SK-N-SH (cell line): ENCODE measurements at regions of chr19 and their contacts with region 1.

Region 1: DNA sequence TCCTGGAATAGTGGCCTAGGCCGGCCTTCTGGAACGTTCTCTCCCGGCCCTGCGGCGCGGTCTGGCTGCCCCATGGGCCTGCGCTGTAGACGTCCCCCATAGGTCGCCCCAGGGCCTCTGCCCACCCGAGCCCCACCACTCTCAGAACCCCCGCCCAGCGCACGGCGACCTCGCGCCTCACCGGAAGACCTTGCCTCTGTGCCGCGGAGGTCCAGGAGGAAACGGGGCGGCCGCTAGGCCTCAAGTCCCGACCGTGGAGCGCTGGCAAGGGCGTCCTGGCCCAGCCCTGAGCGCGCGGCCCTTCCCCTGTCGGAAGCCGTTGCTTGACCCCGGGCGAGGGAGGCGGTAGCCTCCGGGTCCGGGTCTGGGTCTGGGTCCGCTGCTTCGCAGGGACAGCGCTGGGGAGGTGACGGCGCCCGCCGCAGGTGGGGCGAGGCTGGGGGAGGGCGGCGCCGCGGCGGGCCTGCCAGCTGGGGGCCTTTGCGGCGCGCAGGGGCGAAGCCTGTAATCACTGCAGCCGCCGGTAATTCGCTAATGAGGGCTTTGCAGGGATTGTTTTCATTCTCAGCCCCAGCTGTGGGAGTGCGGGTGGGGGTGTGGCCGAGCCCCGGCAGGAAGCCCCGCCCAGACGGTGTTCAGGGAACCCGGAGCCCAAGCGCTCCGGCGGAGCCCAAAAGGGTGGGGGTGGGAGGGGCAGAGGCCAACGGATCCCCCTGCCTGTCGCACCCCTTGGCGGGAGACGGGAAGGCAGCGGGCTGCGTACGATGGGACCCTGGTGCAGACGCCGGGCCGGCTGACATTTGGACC is 8.6 kb downstream of the C19orf25 start:
- DNase-seq: no peak
- H3K4me3 ChIP-seq: no peak overlapping the region
- H3K27ac ChIP-seq: no peak overlapping the region; a peak in 1 of 4 replicates
- H3K4me1 ChIP-seq: peaks cover 0 to 14% of the 10 kb centered on the region in 2 experiments; a peak in 1 of 4 replicates
- H3K27me3 ChIP-seq: no peaks in the 10 kb centered on the region
- CTCF ChIP-seq: no peak
- EP300 ChIP-seq: no peak
- RAD21 ChIP-seq: no peak

Region 2: GRCh38 chr19:1223018-1223855 is 247.2 kb before region 1 on chr19:
- CTCF ChIA-PET with region 1: no interaction called
- POLR2A ChIA-PET with region 1: no interaction called
- DNase-seq: peak; percentile 76
- H3K4me3 ChIP-seq: no peak overlapping the region; a peak in 1 of 4 replicates
- H3K27ac ChIP-seq: no peak overlapping the region; a peak in 1 of 4 replicates
- H3K4me1 ChIP-seq: peaks cover 0 to 5% of the 10 kb centered on the region in 2 experiments; a peak in 1 of 4 replicates
- H3K27me3 ChIP-seq: no peaks in the 10 kb centered on the region
- CTCF ChIP-seq: peak; percentile 61
- EP300 ChIP-seq: no peak
- RAD21 ChIP-seq: peak; percentile 39; the same call in 1 of the 2 replicates

Region 3: DNA sequence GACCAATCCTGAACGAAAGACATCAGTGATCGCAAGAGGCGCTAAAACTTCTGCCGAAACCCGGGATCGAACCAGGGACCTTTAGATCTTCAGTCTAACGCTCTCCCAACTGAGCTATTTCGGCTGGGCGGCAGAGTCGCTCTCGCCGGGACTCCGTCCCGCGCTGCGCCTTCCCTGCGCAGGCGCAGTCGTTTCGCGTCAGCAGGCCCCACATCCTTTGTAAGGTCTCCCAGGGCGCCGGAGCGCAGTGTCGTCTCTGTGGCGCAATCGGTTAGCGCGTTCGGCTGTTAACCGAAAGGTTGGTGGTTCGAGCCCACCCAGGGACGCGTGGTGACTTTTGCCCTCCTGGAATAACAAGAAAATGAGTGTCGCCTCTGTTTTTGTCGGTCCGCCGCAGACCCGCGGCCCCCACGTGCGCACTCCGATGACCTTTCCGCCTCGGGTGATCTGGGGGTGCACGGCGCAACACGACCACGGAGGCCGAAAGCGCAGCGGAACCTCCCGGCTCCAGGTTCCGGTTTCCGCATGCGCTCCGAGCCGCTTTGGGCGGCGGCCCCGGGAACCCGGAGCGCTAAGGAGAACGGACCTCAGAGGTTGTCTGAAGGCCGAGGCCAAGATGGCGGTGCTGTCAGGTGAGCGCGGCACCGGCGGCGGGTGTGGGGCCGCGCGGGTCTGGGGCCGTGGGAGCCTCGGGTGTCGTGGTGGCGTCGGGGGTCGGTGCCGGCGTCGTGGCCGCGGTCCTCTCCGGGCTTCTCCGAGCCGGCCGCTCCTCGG is 86.9 kb before region 1 on chr19 and contains the start of gene NDUFS7:
- CTCF ChIA-PET with region 1: no interaction called
- POLR2A ChIA-PET with region 1: no interaction called
- DNase-seq: peak; percentile 90
- H3K4me3 ChIP-seq: peak within 1 kb of the TSS; percentile 83 to 91
- H3K27ac ChIP-seq: peak within 1 kb of the TSS; percentile 62 to 87
- H3K4me1 ChIP-seq: peaks cover 0 to 12% of the 10 kb centered on the region in 2 experiments; a peak in 1 of 4 replicates
- H3K27me3 ChIP-seq: no peaks in the 10 kb centered on the region
- CTCF ChIP-seq: peak; percentile 39; the same call in 1 of the 2 replicates
- EP300 ChIP-seq: peak; percentile 1 to 51; a peak in 2 of 4 replicates
- RAD21 ChIP-seq: no peak
- polyA plus RNA-seq, gene NDUFS7: 52.5 and 66.4 TPM in 2 replicates

Region 4: DNA sequence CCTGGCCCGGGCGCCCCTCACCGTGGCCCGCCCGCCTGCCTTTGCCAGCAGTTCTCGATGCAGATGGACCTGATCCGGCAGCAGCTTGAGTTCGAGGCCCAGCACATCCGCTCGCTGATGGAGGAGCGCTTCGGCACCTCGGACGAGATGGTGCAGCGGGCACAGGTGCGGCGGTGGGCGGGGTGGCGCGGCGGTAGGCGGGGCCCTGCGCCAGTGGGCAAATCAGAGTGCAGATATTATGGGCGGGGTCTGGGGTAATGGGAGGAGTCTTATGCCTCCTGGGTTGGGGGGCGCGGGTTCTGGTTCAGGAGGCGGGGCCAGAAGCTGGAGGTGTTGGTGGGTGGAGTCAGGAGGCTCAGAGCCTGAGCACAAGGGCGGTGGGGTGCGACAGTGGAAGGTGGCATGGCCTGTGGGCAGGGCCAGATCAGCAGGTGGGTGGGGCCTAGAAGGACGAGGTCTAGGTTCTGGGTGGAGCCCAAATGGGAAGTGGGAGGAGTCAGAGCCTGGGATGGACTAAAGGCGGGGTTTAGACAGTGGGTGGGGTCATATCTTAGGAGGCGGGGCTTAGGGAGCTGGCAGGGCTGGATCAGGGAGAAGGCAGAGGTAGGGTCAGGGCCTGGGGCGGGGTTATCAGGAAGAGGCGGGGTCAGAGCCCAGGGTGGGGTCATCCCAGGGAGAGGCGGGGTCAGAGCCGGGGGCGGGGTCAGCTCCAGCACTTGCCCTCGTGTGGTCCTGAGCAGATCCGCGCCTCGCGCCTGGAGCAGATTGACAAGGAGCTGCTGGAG is 14.9 kb before region 1 on chr19:
- CTCF ChIA-PET with region 1: interaction called, 5 read pairs
- POLR2A ChIA-PET with region 1: interaction called, 10 read pairs
- DNase-seq: peak; percentile 94
- H3K4me3 ChIP-seq: no peak overlapping the region
- H3K27ac ChIP-seq: no peak overlapping the region; a peak in 1 of 4 replicates
- H3K4me1 ChIP-seq: peaks cover 0 to 26% of the 10 kb centered on the region in 2 experiments; a peak in 1 of 4 replicates
- H3K27me3 ChIP-seq: no peaks in the 10 kb centered on the region
- CTCF ChIP-seq: no peak
- EP300 ChIP-seq: no peak
- RAD21 ChIP-seq: no peak